PC-3 (cell line): ENCODE measurements at regions of chr22 and their contacts with region 1.

Region 1: GRCh38 chr22:39490135-39490798 is 11.8 kb upstream of the MIEF1 start:
- DNase-seq: peak; percentile 69
- ATAC-seq: peak; percentile 92
- H3K4me3 ChIP-seq: no peak overlapping the region
- H3K27ac ChIP-seq: no peak overlapping the region
- H3K4me1 ChIP-seq: peaks cover 14% of the 10 kb centered on the region
- H3K27me3 ChIP-seq: no peaks in the 10 kb centered on the region
- CTCF ChIP-seq: no peak

Region 2: GRCh38 chr22:39414886-39415285 is 75.4 kb before region 1 on chr22:
- CTCF ChIA-PET with region 1: no interaction called
- POLR2A ChIA-PET with region 1: no interaction called
- intact Hi-C with region 1: no loop called
- DNase-seq: no peak
- ATAC-seq: no peak
- H3K4me3 ChIP-seq: no peak overlapping the region
- H3K27ac ChIP-seq: no peak overlapping the region
- H3K4me1 ChIP-seq: no peaks in the 10 kb centered on the region
- H3K27me3 ChIP-seq: no peaks in the 10 kb centered on the region
- CTCF ChIP-seq: no peak

Region 3: DNA sequence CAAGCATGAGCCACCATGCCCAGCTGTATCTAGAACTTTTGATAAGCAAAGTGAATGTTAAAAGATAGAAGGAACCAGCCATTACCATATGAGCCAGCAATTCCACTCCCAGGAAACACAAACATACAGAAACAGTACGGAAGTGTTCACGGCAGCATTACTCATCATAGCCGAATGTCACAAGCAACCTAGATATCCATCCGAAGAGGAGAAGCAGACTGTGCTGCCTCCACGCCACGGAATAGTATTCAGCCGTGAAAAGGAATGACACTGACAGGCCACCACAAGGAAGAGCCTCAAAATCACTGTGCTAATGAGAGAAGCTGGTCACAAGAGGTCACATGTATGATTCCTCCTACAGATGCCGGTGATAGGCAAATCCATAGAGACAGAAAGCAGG is 51.1 kb before region 1 on chr22:
- CTCF ChIA-PET with region 1: interaction called, 3 read pairs
- POLR2A ChIA-PET with region 1: no interaction called
- intact Hi-C with region 1: loop called (anchors 10 kb)
- DNase-seq: peak; percentile 58
- ATAC-seq: peak; percentile 81
- H3K4me3 ChIP-seq: no peak overlapping the region
- H3K27ac ChIP-seq: peak overlapping the region; percentile 45
- H3K4me1 ChIP-seq: peaks cover 12% of the 10 kb centered on the region
- H3K27me3 ChIP-seq: no peaks in the 10 kb centered on the region
- CTCF ChIP-seq: no peak

Region 4: DNA sequence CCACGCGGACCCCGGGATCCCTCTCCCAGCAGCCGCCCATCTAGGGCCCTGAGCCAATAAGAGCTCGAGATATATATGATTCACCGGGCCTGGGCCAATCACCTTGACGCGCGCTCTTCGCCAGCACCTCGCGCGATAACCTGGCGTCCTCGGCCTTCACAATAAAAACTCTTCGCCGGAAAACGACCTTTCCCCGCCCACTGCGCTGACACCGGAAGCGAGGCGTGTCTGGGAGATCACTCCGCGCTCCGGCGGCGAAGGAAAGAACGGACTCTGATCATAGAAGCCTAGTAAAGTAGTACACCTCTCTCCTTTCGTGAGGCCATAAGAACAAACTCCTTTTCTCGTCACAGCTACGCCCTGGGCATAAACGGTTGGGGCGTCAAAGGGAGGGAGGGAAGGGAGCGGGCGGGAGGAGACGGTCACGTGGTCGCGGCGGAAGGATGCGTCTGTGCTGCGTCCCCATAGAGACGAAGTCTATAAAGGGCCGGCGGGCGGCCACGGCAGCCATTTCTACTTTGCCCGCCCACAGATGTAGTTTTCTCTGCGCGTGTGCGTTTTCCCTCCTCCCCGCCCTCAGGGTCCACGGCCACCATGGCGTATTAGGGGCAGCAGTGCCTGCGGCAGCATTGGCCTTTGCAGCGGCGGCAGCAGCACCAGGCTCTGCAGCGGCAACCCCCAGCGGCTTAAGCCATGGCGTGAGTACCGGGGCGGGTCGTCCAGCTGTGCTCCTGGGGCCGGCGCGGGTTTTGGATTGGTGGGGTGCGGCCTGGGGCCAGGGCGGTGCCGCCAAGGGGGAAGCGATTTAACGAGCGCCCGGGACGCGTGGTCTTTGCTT is 30.0 kb after region 1 on chr22 and contains the start of gene ATF4:
- CTCF ChIA-PET with region 1: interaction called, 12 read pairs
- POLR2A ChIA-PET with region 1: no interaction called
- intact Hi-C with region 1: no loop called
- DNase-seq: peak; percentile 95
- ATAC-seq: peak; percentile 75
- H3K4me3 ChIP-seq: peak within 1 kb of the TSS; percentile 99
- H3K27ac ChIP-seq: peak within 1 kb of the TSS; percentile 80
- H3K4me1 ChIP-seq: peaks cover 19% of the 10 kb centered on the region
- H3K27me3 ChIP-seq: no peaks in the 10 kb centered on the region
- CTCF ChIP-seq: no peak
- total RNA-seq, gene ATF4: 230 and 240 TPM in 2 replicates